ENCODE measurements at regions of chr18 and their contacts with region 1.

Region 1: DNA sequence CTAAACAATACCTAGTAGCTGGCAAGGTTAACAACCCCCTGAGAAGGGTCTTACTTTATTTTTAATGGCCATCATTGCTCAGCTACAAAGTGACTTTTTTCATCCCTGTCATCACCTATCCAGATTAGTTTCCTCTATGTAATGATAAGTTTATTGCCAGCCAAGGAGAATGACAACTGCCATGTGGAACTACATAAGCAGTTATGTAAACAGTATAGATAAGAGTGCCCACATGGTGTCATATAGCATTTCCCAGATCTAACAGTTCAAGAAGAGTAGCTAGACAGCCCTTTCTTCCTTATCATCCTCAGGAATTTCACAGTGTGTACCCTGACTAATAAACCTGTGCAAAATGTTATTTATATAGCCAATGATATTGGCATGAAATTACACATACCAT is 240.2 kb upstream of the PIK3C3 start:
- DNase-seq: no peak
- H3K4me3 ChIP-seq: no peak overlapping the region
- H3K27ac ChIP-seq: no peak overlapping the region
- H3K4me1 ChIP-seq: no peaks in the 10 kb centered on the region
- H3K27me3 ChIP-seq: no peaks in the 10 kb centered on the region
- CTCF ChIP-seq: no peak
- EP300 ChIP-seq: no peak
- POLR2A ChIP-seq: no peak

Region 2: DNA sequence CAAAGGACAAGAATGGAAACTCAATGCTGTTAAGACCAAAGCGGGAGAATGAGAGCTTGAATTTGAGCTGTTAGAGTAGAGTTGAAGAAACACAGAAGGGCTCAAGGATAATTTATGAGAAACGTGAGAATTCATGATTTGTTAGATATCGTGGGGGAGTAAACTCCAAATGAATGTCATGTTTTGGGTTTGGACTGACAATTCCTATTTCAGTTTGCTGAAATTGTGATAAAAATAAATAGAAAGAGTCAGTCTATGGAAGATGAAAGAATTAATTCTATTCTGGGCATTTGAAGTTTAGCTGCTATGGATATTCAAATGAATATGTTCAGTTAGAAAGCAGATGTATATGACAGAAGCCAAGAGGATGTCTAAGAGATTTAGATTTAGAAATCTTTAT is 483.2 kb before region 1 on chr18:
- intact Hi-C with region 1: no loop called
- DNase-seq: no peak
- H3K4me3 ChIP-seq: no peak overlapping the region
- H3K27ac ChIP-seq: no peak overlapping the region
- H3K4me1 ChIP-seq: no peaks in the 10 kb centered on the region
- H3K27me3 ChIP-seq: no peaks in the 10 kb centered on the region
- CTCF ChIP-seq: no peak
- EP300 ChIP-seq: no peak
- POLR2A ChIP-seq: no peak

Region 3: GRCh38 chr18:41490861-41491260 is 224.0 kb before region 1 on chr18:
- intact Hi-C with region 1: no loop called
- DNase-seq: no peak
- H3K4me3 ChIP-seq: no peak overlapping the region
- H3K27ac ChIP-seq: no peak overlapping the region
- H3K4me1 ChIP-seq: no peaks in the 10 kb centered on the region
- H3K27me3 ChIP-seq: no peaks in the 10 kb centered on the region
- CTCF ChIP-seq: no peak
- EP300 ChIP-seq: no peak
- POLR2A ChIP-seq: no peak

Region 4: DNA sequence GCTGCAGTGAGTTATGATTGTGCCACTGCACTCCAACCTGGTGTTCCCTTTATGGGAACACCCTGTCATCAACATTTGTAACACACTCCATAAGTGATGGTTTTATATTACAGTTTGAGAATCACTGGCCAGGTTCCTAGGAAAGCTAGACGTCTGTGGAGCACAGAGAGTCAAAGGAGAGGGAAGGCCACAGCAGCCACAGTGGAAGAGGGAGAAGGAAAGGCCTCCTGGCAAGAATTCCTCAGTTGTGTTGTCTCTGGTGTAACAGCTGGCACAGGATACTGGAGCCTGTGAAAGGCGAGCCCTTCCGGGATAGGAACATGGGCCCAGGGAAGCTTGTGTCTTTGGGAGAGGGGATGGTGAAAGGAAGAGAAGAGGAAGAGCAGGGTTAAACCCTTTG is 120.3 kb before region 1 on chr18:
- intact Hi-C with region 1: no loop called
- DNase-seq: no peak
- H3K4me3 ChIP-seq: no peak overlapping the region
- H3K27ac ChIP-seq: no peak overlapping the region
- H3K4me1 ChIP-seq: no peaks in the 10 kb centered on the region
- H3K27me3 ChIP-seq: no peaks in the 10 kb centered on the region
- CTCF ChIP-seq: no peak
- EP300 ChIP-seq: no peak
- POLR2A ChIP-seq: no peak

Region 5: DNA sequence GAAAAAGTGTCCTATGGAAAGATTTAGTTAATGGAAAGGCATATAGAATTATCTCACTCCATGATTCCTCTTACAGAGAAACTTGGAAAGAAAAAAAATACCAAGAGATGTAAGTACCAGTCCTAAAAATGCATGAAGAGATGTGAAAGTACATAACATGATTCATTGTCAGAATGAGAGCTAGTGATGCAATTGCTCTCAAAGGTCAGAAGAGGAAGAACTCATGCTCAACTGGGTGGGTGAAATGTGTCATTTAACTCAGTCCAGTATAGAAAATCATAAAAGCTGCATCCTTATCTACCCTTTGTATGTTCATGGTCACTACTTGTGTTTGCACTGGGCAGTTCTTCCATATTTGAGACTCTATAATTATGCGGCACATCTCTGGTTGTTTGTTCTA is 59.8 kb before region 1 on chr18:
- intact Hi-C with region 1: loop called in 1 of 4 experiments (anchors 5 kb)
- DNase-seq: no peak
- H3K4me3 ChIP-seq: no peak overlapping the region
- H3K27ac ChIP-seq: no peak overlapping the region
- H3K4me1 ChIP-seq: no peaks in the 10 kb centered on the region
- H3K27me3 ChIP-seq: no peaks in the 10 kb centered on the region
- CTCF ChIP-seq: no peak
- EP300 ChIP-seq: no peak
- POLR2A ChIP-seq: no peak

Region 6: GRCh38 chr18:41828137-41828536 is 113.3 kb after region 1 on chr18:
- intact Hi-C with region 1: no loop called
- DNase-seq: no peak
- H3K4me3 ChIP-seq: no peak overlapping the region
- H3K27ac ChIP-seq: no peak overlapping the region
- H3K4me1 ChIP-seq: no peaks in the 10 kb centered on the region
- H3K27me3 ChIP-seq: no peaks in the 10 kb centered on the region
- CTCF ChIP-seq: no peak
- EP300 ChIP-seq: no peak
- POLR2A ChIP-seq: no peak

Measured in ovary (tissue), 10 donors.